ENCODE measurements at regions of chr4 and their contacts with region 1.

Region 1: DNA sequence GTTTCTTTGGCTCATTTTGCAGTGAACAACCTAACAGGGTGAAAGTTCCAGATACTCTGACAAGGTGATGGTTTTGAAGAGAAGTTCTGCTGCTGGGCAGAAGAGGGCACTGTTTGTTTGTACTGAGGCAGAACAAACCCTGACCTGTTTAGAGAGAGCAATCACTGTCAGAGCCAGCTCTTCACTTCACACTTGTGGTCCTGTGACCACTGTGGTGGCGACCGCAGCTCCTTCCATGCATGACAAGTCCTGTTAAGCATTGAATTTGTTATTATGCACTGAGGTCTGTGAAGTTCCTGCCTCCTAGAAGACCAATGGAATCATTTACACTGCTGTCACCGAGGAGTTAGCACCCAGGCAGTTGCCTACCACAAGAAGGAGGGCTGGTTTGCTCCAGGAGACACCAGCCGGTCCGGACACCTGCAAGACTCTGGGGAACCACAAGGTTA is 86.6 kb downstream of the ZNF330 start:
- DNase-seq: peak; percentile 69
- H3K4me3 ChIP-seq: no peak overlapping the region
- H3K27ac ChIP-seq: no peak overlapping the region
- H3K4me1 ChIP-seq: no peaks in the 10 kb centered on the region
- H3K27me3 ChIP-seq: no peaks in the 10 kb centered on the region
- CTCF ChIP-seq: peak; percentile 69 to 81
- POLR2A ChIP-seq: no peak

Region 2: GRCh38 chr4:141158219-141158618 is 149.0 kb before region 1 on chr4:
- CTCF ChIA-PET with region 1: no interaction called
- POLR2A ChIA-PET with region 1: no interaction called
- dilution Hi-C with region 1: no loop called
- intact Hi-C with region 1: loop called (anchors 5 kb)
- DNase-seq: peak; percentile 37
- H3K4me3 ChIP-seq: no peak overlapping the region
- H3K27ac ChIP-seq: no peak overlapping the region
- H3K4me1 ChIP-seq: no peaks in the 10 kb centered on the region
- H3K27me3 ChIP-seq: peaks cover under 1 to 3% of the 10 kb centered on the region in 2 experiments
- CTCF ChIP-seq: peak in 1 of 2 donors; percentile 28
- POLR2A ChIP-seq: no peak

Region 3: DNA sequence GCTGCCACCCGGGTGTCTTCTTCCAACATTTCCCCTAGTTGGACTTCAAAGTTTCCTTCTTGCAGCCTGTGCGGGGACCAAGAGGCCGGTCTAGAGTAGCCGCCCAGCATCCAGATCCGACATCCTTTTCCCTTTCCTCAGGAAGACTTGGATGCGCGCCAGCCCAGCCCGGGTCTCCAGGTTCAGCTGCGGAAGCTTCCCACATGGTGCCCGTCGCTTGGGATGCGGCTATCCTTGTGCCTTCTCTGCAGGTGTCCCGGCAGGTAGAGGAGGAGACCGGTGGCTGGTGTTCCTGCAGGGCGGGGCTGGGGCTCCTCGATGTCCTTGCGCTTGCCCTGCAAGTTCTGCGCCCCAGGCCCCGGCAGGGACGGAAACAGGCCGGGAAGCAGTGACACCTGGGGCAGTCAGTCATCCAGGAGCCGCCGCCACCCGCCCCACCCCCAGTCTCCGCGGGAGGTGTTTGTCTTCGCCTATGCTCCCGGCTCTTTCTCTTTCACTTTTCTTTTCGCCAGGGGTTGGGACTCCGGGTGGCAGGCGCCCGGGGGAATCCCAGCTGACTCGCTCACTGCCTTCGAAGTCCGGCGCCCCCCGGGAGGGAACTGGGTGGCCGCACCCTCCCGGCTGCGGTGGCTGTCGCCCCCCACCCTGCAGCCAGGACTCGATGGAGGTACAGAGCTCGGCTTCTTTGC is 329.0 kb after region 1 on chr4 and contains the start of gene IL15:
- CTCF ChIA-PET with region 1: no interaction called
- POLR2A ChIA-PET with region 1: no interaction called
- dilution Hi-C with region 1: no loop called
- intact Hi-C with region 1: loop called (anchors 5 kb)
- DNase-seq: peak; percentile 74
- H3K4me3 ChIP-seq: peak within 1 kb of the TSS; percentile 79 to 90 (median 86)
- H3K27ac ChIP-seq: peak within 1 kb of the TSS; percentile 25
- H3K4me1 ChIP-seq: peaks cover 8% of the 10 kb centered on the region
- H3K27me3 ChIP-seq: no peaks in the 10 kb centered on the region
- CTCF ChIP-seq: no peak
- POLR2A ChIP-seq: no peak
- total RNA-seq, gene IL15: 3.0 and 3.1 TPM in 2 replicates

Region 4: DNA sequence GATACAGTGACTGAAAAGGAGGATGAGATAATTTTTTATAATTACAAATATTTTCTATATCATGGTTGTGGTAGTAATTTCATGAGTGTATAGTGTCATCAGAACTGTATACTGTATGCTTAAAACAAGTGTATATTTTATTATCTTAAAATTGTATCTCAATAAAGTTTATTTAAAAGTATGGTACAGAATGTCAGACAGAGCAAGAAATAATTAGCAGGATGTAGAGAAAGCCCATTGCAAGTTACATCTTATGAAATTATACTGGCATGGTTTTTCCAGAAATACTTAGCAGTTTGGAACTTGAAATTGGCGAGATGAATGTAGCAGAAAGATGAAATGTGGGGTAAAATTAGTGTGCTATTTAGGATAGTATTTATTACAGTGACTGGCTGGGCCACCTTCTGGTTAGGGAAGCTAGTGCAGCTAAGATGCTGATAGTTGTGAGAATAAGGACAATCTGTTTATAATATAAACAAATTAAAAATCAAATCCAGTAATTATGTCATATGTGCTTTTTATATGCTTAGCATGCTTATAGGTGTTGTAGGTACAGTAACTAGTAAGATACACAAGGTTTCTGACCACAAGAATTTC is 403.8 kb after region 1 on chr4:
- CTCF ChIA-PET with region 1: interaction called, 12 read pairs
- POLR2A ChIA-PET with region 1: no interaction called
- dilution Hi-C with region 1: no loop called
- intact Hi-C with region 1: loop called (anchors 1 kb)
- DNase-seq: peak; percentile 50
- H3K4me3 ChIP-seq: no peak overlapping the region
- H3K27ac ChIP-seq: no peak overlapping the region
- H3K4me1 ChIP-seq: peaks cover 4% of the 10 kb centered on the region
- H3K27me3 ChIP-seq: no peaks in the 10 kb centered on the region
- CTCF ChIP-seq: peak; percentile 40 to 52
- POLR2A ChIP-seq: no peak

Region 5: GRCh38 chr4:142719854-142720541 is 1412.7 kb after region 1 on chr4:
- CTCF ChIA-PET with region 1: interaction called, 12 read pairs
- POLR2A ChIA-PET with region 1: no interaction called
- dilution Hi-C with region 1: no loop called
- intact Hi-C with region 1: loop called (anchors 10 kb)
- DNase-seq: peak; percentile 39
- H3K4me3 ChIP-seq: no peak overlapping the region
- H3K27ac ChIP-seq: no peak overlapping the region
- H3K4me1 ChIP-seq: no peaks in the 10 kb centered on the region
- H3K27me3 ChIP-seq: no peaks in the 10 kb centered on the region
- CTCF ChIP-seq: peak in 1 of 2 donors; percentile 27
- POLR2A ChIP-seq: no peak

Region 6: DNA sequence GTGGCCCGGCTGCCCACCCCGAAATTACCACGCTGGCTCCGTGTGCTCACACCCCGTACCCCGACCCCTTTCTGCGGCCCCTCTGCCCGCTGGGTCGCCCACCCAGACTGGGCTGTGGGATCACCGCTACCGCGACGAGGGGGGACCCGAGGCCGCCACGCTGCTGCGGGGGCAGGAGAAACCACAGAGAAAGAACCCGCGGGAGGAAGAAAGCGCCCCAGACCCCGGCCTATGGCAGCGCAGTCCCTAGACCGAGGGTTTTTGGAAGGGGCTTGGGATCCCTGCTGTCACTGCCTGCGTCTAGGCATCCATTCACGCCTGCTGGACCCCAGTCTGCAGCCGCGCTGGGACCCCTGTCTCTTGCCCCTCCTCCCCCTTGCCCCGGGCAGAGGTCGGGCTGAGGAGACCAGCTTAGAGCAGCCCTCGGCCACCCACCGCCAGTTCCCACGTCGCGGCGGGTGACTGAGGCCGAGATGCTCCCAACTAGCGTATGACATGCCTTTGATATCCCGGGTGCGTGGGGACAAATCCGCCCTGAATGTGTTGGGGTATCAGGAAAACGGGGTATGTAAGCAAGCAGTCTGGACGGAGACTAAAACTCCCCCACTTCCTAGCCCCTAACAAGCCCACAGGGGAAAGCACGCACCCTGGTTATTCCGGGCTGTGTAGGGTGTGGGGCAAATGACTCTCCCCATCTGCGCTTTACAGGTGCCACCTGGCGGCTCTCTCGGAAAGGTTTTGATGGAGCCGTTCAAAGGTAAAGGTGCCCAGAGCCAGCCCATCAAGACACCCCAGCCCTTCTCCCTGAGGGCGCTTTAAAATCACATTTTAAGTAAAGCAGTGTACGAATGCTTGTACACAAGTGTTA is 1539.7 kb after region 1 on chr4:
- CTCF ChIA-PET with region 1: interaction called, 3 read pairs
- POLR2A ChIA-PET with region 1: no interaction called
- dilution Hi-C with region 1: no loop called
- intact Hi-C with region 1: loop called (anchors 2 kb)
- DNase-seq: peak; percentile 18
- H3K4me3 ChIP-seq: peak overlapping the region; percentile 42 to 68 (median 61)
- H3K27ac ChIP-seq: no peak overlapping the region
- H3K4me1 ChIP-seq: no peaks in the 10 kb centered on the region
- H3K27me3 ChIP-seq: peaks cover 14 to 21% of the 10 kb centered on the region in 2 experiments
- CTCF ChIP-seq: peak in 1 of 2 donors; percentile 22
- POLR2A ChIP-seq: no peak

Measured in endothelial cell of umbilical vein (primary cell).